ENCODE measurements at regions of chr7 and their contacts with region 1.

Region 1: GRCh38 chr7:104983578-104984539 is 30.1 kb upstream of the KMT2E start:
- DNase-seq: peak; percentile 96
- H3K4me3 ChIP-seq: peak overlapping the region; percentile 67 to 73 (median 70)
- H3K27ac ChIP-seq: peak overlapping the region; percentile 94 to 97 (median 96)
- H3K4me1 ChIP-seq: peaks cover 39 to 63% (median 44%) of the 10 kb centered on the region in 4 donors
- H3K27me3 ChIP-seq: no peaks in the 10 kb centered on the region
- CTCF ChIP-seq: peak; percentile 55 to 64 (median 58)
- EP300 ChIP-seq: no peak
- POLR2A ChIP-seq: peak; percentile 66

Region 2: DNA sequence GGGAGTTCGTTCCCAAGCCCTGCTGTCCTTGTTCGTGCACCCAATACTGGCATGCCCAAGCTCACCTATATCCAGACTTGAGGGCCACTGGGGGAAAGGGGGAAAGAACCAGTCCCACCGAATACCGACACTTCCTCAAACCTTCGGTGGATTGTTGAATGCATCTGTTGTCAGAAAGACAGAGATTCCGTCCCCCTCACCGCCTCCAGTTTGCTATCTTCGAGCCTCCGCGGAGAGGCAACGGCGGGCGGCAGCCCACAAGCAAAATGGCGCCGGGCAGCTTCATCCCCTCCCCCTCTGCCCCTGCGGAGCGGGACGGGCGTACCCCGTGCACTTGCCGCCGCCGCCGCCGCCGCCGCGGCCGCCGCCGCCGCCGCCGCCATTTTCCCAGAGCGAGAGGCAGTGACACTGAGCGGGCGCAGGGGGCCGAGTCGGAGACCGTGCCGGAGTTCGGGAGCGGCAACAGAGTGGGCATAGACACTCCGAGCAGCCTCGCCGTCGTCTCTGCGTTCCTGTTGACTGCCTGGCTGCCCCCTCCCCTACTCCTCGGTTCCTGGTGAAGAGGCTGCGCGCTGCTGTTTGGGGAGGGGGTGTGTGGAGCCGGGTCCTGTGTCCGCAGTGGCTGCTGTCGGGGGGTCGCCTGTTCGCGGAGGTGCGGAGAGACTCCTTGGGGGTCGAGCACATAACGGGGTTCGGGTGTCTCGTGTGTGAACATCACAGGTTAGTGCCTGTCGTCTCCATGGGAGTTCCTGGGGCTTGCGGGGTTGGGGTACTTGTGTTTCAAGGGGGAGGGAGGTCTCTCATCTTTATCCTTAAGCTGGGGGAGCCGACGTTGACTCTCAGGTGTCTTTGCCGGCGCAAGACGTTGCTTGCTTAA is 30.2 kb after region 1 on chr7 and contains the start of gene KMT2E:
- intact Hi-C with region 1: loop called (anchors 2 kb)
- DNase-seq: peak; percentile 96
- H3K4me3 ChIP-seq: peak within 1 kb of the TSS; percentile 67 to 90 (median 86)
- H3K27ac ChIP-seq: peak within 1 kb of the TSS; percentile 95 to 100 (median 100)
- H3K4me1 ChIP-seq: peaks cover 21 to 45% (median 35%) of the 10 kb centered on the region in 4 donors
- H3K27me3 ChIP-seq: no peaks in the 10 kb centered on the region
- CTCF ChIP-seq: peak in 1 of 3 experiments; percentile 10
- EP300 ChIP-seq: no peak
- POLR2A ChIP-seq: peak; percentile 21
- total RNA-seq, gene KMT2E: 77.0 to 109 (median 94.0) TPM

Region 3: DNA sequence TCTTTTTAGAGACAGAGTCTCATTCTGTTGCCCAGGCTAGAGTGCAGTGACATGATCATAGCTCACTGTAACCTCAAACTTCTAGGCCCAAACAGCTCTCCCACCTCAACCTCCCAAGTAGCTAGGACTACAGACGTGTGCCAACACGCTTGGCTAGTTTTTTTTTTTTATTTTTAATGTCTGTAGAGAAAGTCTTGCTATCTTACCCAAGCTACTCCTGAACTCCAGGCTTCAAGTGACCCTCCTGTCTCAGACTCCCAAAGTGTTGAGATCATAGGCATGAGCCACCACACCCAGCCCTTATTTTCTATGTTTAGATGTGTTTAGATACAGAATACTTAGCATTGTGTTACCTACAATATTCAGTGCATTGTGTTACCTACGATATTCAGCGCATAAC is 76.6 kb after region 1 on chr7:
- intact Hi-C with region 1: loop called (anchors 10 kb)
- DNase-seq: no peak
- H3K4me3 ChIP-seq: no peak overlapping the region
- H3K27ac ChIP-seq: no peak overlapping the region
- H3K4me1 ChIP-seq: peaks cover 19 to 81% (median 67%) of the 10 kb centered on the region in 4 donors
- H3K27me3 ChIP-seq: no peaks in the 10 kb centered on the region
- CTCF ChIP-seq: no peak
- EP300 ChIP-seq: no peak
- POLR2A ChIP-seq: no peak

Region 4: GRCh38 chr7:105101864-105102263 is 118.0 kb after region 1 on chr7:
- intact Hi-C with region 1: loop called (anchors 10 kb)
- DNase-seq: no peak
- H3K4me3 ChIP-seq: no peak overlapping the region
- H3K27ac ChIP-seq: peak overlapping the region in 2 of 4 donors; percentile 4 to 24
- H3K4me1 ChIP-seq: peaks cover 12 to 78% (median 57%) of the 10 kb centered on the region in 4 donors
- H3K27me3 ChIP-seq: no peaks in the 10 kb centered on the region
- CTCF ChIP-seq: no peak
- EP300 ChIP-seq: no peak
- POLR2A ChIP-seq: no peak

Measured in esophagus muscularis mucosa (tissue), 4 donors.